Activated CD8-positive, alpha-beta memory T cell treated with anti-CD3 and anti-CD28 coated beads, Interleukin-2, amount 10 ng/mL, durations not matched to agents 7 days and 5 days (primary cell): ENCODE measurements at regions of chr19 and their contacts with region 1.

Region 1: GRCh38 chr19:1315470-1316231 is 30.0 kb downstream of the EFNA2 start:
- DNase-seq: peak; percentile 49
- ATAC-seq: peak; percentile 70
- H3K4me3 Mint-ChIP-seq: no peak overlapping the region
- H3K27ac Mint-ChIP-seq: no peak overlapping the region
- H3K4me1 Mint-ChIP-seq: no peaks in the 10 kb centered on the region
- H3K27me3 Mint-ChIP-seq: peaks cover 34% of the 10 kb centered on the region

Region 2: DNA sequence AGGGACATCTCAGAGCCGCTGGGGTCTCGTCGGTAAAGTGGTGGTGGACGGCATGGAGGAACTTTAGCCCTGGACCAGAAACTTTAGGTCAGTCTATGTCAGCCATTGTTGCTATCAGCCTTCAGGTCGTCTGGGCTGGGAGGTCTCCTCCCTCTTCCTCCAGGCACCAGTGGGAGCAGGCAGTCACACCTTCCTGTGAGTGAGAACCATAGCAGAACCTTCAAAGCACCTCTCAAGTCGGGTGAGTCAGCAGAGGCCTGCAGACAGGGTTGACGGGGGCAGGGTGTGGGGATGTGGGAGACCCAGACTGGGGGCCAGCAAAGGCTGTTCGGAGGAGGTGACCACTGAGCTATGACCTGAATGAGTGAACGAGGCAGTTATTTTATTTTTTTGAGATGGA is 126.2 kb before region 1 on chr19:
- CTCF ChIA-PET with region 1: no interaction called
- DNase-seq: peak; percentile 61
- ATAC-seq: peak; percentile 43
- H3K4me3 Mint-ChIP-seq: no peak overlapping the region
- H3K27ac Mint-ChIP-seq: peak overlapping the region; percentile 48
- H3K4me1 Mint-ChIP-seq: peaks cover 22% of the 10 kb centered on the region
- H3K27me3 Mint-ChIP-seq: no peaks in the 10 kb centered on the region

Region 3: GRCh38 chr19:1373534-1374249 is 58.0 kb after region 1 on chr19:
- CTCF ChIA-PET with region 1: interaction called, 24 read pairs
- DNase-seq: no peak
- ATAC-seq: no peak
- H3K4me3 Mint-ChIP-seq: no peak overlapping the region
- H3K27ac Mint-ChIP-seq: no peak overlapping the region
- H3K4me1 Mint-ChIP-seq: no peaks in the 10 kb centered on the region
- H3K27me3 Mint-ChIP-seq: no peaks in the 10 kb centered on the region